ENCODE measurements at regions of chr4 and their contacts with region 1.

Region 1: DNA sequence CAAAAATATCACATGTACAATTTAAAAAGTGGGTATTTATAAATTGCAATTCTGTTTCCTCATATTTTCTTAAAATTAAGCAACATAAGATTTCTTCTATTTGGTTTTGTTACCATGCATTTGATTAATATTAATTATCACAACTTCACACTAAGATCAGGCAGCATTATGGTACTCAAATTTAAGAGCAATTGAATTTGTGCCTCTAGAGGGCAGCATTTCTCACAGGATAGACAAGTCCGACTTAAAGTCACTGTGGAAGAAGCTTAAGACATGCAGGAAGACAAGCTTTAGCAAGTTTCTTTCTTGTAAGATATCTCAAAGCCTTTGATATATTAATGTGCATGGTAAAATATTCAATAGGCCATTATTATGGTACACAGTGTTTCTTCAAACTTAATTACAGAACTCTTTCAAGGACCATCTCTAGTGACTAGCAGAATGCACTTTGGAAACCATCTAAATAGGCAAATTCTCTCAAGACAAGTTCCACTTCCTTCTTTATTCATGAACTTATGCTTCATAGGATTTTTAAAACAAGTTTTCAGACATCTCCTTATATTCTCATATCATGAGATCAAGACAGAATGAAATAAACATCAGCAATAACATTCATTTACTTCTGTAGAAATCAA is 35.0 kb downstream of the FBXW7 start:
- DNase-seq: peak in 10 of 14 experiments; percentile 22 to 90 (median 56)
- ATAC-seq: peak; percentile 85
- H3K4me3 ChIP-seq: no peak overlapping the region
- H3K4me3 Mint-ChIP-seq: no peak overlapping the region
- H3K27ac ChIP-seq: no peak overlapping the region
- H3K27ac Mint-ChIP-seq: no peak overlapping the region
- H3K4me1 ChIP-seq: peaks cover 3% of the 10 kb centered on the region
- H3K4me1 Mint-ChIP-seq: peaks cover 40% of the 10 kb centered on the region
- H3K27me3 ChIP-seq: no peaks in the 10 kb centered on the region
- H3K27me3 Mint-ChIP-seq: no peaks in the 10 kb centered on the region
- CTCF ChIP-seq: peak; percentile 84

Region 2: DNA sequence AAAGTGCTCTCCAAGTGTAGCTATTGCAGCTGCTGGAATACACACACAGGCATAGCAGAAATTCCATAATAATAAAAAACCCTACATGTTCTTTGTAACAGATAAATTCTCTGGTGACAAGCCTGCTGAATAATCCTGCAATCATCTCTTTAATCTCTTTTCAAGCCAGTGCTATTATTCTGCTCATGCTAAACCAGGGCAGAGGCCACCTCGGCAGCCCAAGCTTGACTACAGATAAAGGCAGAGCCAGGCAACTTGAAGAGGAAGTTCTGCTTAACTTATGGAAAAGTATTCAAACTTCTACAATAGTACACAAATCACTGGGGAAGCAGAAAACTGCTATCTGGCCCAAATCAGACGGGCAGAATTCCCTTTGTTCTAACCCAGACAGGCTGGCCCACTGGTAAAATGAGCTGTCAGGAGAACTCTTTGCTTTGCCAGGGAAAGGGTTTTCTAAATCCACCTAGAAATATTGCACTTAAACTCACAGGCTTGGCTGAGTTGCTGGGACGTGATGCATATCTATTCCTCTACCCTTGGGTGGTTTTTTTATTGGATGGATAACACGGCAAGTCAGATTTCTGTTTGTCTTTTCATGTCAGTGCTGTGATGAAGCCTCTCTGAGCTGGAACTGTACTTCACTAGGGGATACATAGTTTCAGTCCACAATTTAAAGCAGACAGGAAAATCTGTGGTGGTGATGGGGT is 810.6 kb before region 1 on chr4:
- CTCF ChIA-PET with region 1: no interaction called
- POLR2A ChIA-PET with region 1: no interaction called
- intact Hi-C with region 1: no loop called
- DNase-seq: no peak
- ATAC-seq: no peak
- H3K4me3 ChIP-seq: no peak overlapping the region
- H3K4me3 Mint-ChIP-seq: no peak overlapping the region
- H3K27ac ChIP-seq: no peak overlapping the region
- H3K27ac Mint-ChIP-seq: no peak overlapping the region
- H3K4me1 ChIP-seq: no peaks in the 10 kb centered on the region
- H3K4me1 Mint-ChIP-seq: no peaks in the 10 kb centered on the region
- H3K27me3 ChIP-seq: no peaks in the 10 kb centered on the region
- H3K27me3 Mint-ChIP-seq: no peaks in the 10 kb centered on the region
- CTCF ChIP-seq: no peak

Region 3: DNA sequence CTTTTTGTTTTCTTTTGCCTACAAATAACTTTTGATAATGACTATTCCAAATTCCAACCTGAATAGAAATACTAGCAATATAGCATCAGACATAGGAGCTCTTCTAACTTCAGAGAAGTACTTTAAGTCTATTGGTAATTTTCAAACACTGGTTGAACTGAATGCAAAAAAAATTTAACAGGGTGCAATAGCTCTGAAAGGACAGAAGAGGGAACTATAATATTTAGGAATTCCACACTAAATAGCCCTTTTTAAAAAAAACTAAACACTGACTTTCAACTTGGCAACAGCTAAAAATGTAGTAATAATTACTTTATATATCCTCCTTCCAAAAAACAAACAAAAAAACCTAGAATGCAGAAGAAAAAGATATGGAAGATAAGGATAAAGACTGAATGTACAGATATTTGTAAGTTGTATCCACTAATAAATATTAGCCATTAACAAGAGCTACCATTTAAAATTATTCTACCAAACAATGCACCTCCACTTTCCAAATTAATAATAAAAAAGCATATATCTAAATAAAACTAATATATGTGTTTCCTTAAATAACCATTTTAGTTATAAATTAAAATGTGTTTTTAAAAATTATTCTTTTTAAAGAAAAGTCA is 46.4 kb before region 1 on chr4:
- CTCF ChIA-PET with region 1: interaction called, 3 read pairs
- POLR2A ChIA-PET with region 1: interaction called, 3 read pairs
- intact Hi-C with region 1: loop called in 1 of 2 experiments (anchors 5 kb)
- DNase-seq: peak in 2 of 14 experiments; percentile 17 to 35
- ATAC-seq: peak; percentile 37
- H3K4me3 ChIP-seq: no peak overlapping the region
- H3K4me3 Mint-ChIP-seq: no peak overlapping the region
- H3K27ac ChIP-seq: no peak overlapping the region
- H3K27ac Mint-ChIP-seq: no peak overlapping the region
- H3K4me1 ChIP-seq: no peaks in the 10 kb centered on the region
- H3K4me1 Mint-ChIP-seq: peaks cover 48% of the 10 kb centered on the region
- H3K27me3 ChIP-seq: no peaks in the 10 kb centered on the region
- H3K27me3 Mint-ChIP-seq: no peaks in the 10 kb centered on the region
- CTCF ChIP-seq: peak; percentile 61

Region 4: GRCh38 chr4:152485726-152486276 is 15.1 kb before region 1 on chr4:
- CTCF ChIA-PET with region 1: interaction called, 11 read pairs
- POLR2A ChIA-PET with region 1: interaction called, 3 read pairs
- intact Hi-C with region 1: no loop called
- DNase-seq: peak in 5 of 14 experiments; percentile 0 to 74 (median 59)
- ATAC-seq: peak; percentile 98
- H3K4me3 ChIP-seq: no peak overlapping the region
- H3K4me3 Mint-ChIP-seq: no peak overlapping the region
- H3K27ac ChIP-seq: no peak overlapping the region
- H3K27ac Mint-ChIP-seq: peak overlapping the region; percentile 15
- H3K4me1 ChIP-seq: no peaks in the 10 kb centered on the region
- H3K4me1 Mint-ChIP-seq: peaks cover 57% of the 10 kb centered on the region
- H3K27me3 ChIP-seq: no peaks in the 10 kb centered on the region
- H3K27me3 Mint-ChIP-seq: no peaks in the 10 kb centered on the region
- CTCF ChIP-seq: no peak

Region 5: DNA sequence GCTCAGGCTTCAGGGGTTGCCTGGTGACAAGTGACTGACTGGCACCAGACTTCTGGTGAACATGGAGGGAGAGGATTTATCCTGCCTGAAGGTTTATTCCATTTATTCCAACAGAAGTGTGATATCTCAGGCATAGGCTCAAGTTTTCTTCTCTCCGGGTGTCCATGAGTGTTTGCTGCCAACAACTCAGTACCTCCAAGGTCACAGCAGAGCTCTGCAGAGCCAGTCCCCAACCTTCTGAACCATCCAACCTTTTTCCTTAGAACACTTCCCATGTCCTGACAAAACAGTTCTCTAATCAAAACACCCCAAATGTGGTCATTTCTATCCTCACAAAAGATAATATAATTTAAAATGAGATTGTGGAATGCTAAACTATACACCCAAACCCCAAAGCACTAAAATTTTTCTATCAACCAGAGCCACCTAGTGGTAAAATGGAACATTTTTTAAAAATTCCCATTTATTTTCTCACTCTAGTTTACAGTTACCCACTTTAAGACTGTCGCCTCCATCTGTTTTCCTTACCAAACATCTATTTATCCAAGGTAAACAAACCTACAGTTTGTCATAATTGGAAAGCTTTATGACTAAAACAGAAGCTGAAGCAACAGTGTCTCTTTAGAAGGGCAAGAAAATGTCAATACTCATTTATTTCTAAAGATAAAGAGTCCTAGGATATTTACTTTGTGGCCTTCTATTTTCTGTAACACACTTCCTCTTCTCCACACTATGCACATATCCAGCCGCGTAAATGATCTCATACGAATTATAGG is 139.3 kb after region 1 on chr4:
- CTCF ChIA-PET with region 1: interaction called, 51 read pairs
- POLR2A ChIA-PET with region 1: interaction called, 7 read pairs
- intact Hi-C with region 1: loop called (anchors 1 kb)
- DNase-seq: peak in 3 of 14 experiments; percentile 39 to 47 (median 41)
- ATAC-seq: peak; percentile 56
- H3K4me3 ChIP-seq: no peak overlapping the region
- H3K4me3 Mint-ChIP-seq: no peak overlapping the region
- H3K27ac ChIP-seq: no peak overlapping the region
- H3K27ac Mint-ChIP-seq: no peak overlapping the region
- H3K4me1 ChIP-seq: peaks cover 16% of the 10 kb centered on the region
- H3K4me1 Mint-ChIP-seq: peaks cover 22% of the 10 kb centered on the region
- H3K27me3 ChIP-seq: no peaks in the 10 kb centered on the region
- H3K27me3 Mint-ChIP-seq: no peaks in the 10 kb centered on the region
- CTCF ChIP-seq: peak; percentile 87

Region 6: GRCh38 chr4:152666946-152667345 is 166.0 kb after region 1 on chr4:
- CTCF ChIA-PET with region 1: no interaction called
- POLR2A ChIA-PET with region 1: no interaction called
- intact Hi-C with region 1: no loop called
- DNase-seq: no peak
- ATAC-seq: no peak
- H3K4me3 ChIP-seq: no peak overlapping the region
- H3K4me3 Mint-ChIP-seq: no peak overlapping the region
- H3K27ac ChIP-seq: no peak overlapping the region
- H3K27ac Mint-ChIP-seq: no peak overlapping the region
- H3K4me1 ChIP-seq: peaks cover 13% of the 10 kb centered on the region
- H3K4me1 Mint-ChIP-seq: peaks cover 39% of the 10 kb centered on the region
- H3K27me3 ChIP-seq: no peaks in the 10 kb centered on the region
- H3K27me3 Mint-ChIP-seq: no peaks in the 10 kb centered on the region
- CTCF ChIP-seq: no peak

Region 7: DNA sequence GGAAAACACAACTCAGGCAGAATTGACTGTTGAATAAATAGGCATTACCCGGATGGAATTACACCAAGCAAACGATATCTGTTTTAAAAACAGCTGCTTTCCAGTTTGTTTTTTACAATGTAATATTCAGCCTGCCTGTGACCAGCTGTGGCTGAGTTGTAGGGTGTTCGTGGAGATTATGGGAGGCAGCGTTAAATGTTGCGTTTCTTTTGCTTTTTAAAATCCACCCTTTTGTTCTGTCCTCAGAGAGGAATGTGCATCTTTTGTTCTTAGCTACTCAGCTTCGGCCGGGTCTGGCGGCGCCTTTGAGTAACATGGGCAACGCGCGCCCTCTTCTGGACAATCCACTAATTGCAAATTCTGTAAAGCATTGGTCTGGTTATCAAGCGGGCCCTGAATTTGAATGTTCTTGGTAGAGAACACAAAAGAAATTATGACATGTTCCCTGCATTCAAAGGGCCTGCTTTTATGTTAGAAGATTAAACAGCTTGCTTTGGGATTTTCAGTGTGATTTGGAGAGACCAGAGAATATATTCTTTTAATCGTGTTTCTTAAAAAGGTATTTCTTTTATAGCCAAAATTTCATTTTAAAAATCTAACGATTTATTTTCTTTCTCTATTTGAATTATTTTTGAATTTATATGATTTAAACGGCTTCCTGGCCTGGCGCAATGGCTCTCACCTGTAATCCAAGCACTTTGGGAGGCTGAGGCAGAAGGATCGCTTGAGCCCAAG is 627.0 kb after region 1 on chr4:
- CTCF ChIA-PET with region 1: no interaction called
- POLR2A ChIA-PET with region 1: no interaction called
- intact Hi-C with region 1: loop called in 1 of 2 experiments (anchors 2 kb)
- DNase-seq: peak; percentile 72 to 94 (median 83)
- ATAC-seq: peak; percentile 97
- H3K4me3 ChIP-seq: no peak overlapping the region
- H3K4me3 Mint-ChIP-seq: no peak overlapping the region
- H3K27ac ChIP-seq: no peak overlapping the region
- H3K27ac Mint-ChIP-seq: peak overlapping the region; percentile 43
- H3K4me1 ChIP-seq: peaks cover 4% of the 10 kb centered on the region
- H3K4me1 Mint-ChIP-seq: peaks cover 7% of the 10 kb centered on the region
- H3K27me3 ChIP-seq: no peaks in the 10 kb centered on the region
- H3K27me3 Mint-ChIP-seq: no peaks in the 10 kb centered on the region
- CTCF ChIP-seq: peak; percentile 94

Measured in CD4-positive, alpha-beta T cell (primary cell).